Esophagus muscularis mucosa (tissue), 4 donors: ENCODE measurements at regions of chr1 and their contacts with region 1.

Region 1: DNA sequence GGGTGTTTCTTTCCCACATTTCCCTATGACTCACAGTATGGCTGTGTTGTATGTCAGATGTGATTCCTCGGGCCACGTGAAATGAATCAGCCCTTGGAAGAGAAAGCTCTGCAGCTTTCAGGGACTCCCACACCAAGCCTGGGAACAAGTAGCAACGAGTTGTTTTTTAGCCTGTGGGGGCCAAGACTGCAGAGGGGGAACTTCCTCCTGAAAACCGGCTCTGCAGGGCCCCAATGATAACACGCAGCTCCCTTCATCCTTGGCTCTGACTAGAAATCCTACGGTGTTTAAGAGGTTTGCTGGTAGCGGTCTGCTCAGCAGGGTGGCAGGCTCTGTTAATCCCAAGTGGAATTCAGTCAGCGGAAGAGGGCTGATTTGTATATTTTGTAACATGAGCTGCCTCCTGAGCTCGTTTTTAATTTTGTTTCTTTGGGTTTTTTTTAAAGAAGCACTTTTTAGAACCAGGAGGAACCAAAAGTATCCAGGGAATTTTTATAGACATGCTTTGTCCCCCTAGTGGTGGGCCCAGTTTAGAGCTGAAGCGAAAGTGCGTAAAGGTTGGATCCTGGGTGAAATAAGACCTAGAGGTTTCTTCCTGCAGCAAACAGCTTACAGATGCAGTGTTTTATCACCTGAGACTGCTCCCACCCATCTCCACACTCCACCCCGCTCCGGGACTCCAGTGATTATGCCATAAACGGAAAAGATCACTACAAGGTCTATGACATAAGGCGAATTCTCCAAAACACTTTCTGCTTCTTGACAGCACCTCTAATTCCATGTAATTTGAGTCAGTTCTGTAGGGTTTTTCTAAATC is 48.8 kb downstream of the LAMC2 start:
- DNase-seq: peak; percentile 93
- H3K4me3 ChIP-seq: peak overlapping the region; percentile 36 to 48 (median 45)
- H3K27ac ChIP-seq: peak overlapping the region; percentile 78 to 86 (median 84)
- H3K4me1 ChIP-seq: peaks cover 10 to 43% (median 38%) of the 10 kb centered on the region in 4 donors
- H3K27me3 ChIP-seq: no peaks in the 10 kb centered on the region
- CTCF ChIP-seq: peak; percentile 72 to 81 (median 73)
- EP300 ChIP-seq: no peak
- POLR2A ChIP-seq: no peak

Region 2: DNA sequence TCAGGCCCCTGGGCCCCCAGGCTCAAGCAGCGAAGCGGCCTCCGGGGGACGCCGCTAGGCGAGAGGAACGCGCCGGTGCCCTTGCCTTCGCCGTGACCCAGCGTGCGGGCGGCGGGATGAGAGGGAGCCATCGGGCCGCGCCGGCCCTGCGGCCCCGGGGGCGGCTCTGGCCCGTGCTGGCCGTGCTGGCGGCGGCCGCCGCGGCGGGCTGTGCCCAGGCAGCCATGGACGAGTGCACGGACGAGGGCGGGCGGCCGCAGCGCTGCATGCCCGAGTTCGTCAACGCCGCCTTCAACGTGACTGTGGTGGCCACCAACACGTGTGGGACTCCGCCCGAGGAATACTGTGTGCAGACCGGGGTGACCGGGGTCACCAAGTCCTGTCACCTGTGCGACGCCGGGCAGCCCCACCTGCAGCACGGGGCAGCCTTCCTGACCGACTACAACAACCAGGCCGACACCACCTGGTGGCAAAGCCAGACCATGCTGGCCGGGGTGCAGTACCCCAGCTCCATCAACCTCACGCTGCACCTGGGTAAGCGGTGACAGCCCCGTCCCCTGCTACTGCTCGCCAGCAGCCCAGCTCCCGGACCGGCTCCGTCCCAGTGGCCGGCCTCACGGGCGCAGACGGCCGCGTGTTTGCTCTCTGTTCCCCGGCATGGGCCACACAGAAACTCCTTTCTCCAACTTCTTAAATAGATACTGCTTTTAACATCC is 211.1 kb before region 1 on chr1:
- intact Hi-C with region 1: loop called (anchors 5 kb)
- DNase-seq: no peak
- H3K4me3 ChIP-seq: peak overlapping the region; percentile 80 to 97 (median 92)
- H3K27ac ChIP-seq: peak overlapping the region; percentile 98 to 100 (median 100)
- H3K4me1 ChIP-seq: peaks cover 28 to 52% (median 48%) of the 10 kb centered on the region in 4 donors
- H3K27me3 ChIP-seq: no peaks in the 10 kb centered on the region
- CTCF ChIP-seq: peak; percentile 43 to 53 (median 44)
- EP300 ChIP-seq: no peak
- POLR2A ChIP-seq: peak; percentile 25

Region 3: GRCh38 chr1:183144752-183145151 is 90.1 kb before region 1 on chr1:
- intact Hi-C with region 1: loop called (anchors 5 kb)
- DNase-seq: no peak
- H3K4me3 ChIP-seq: no peak overlapping the region
- H3K27ac ChIP-seq: peak overlapping the region; percentile 78 to 81 (median 80)
- H3K4me1 ChIP-seq: peaks cover 15 to 71% (median 67%) of the 10 kb centered on the region in 4 donors
- H3K27me3 ChIP-seq: no peaks in the 10 kb centered on the region
- CTCF ChIP-seq: no peak
- EP300 ChIP-seq: no peak
- POLR2A ChIP-seq: no peak

Region 4: DNA sequence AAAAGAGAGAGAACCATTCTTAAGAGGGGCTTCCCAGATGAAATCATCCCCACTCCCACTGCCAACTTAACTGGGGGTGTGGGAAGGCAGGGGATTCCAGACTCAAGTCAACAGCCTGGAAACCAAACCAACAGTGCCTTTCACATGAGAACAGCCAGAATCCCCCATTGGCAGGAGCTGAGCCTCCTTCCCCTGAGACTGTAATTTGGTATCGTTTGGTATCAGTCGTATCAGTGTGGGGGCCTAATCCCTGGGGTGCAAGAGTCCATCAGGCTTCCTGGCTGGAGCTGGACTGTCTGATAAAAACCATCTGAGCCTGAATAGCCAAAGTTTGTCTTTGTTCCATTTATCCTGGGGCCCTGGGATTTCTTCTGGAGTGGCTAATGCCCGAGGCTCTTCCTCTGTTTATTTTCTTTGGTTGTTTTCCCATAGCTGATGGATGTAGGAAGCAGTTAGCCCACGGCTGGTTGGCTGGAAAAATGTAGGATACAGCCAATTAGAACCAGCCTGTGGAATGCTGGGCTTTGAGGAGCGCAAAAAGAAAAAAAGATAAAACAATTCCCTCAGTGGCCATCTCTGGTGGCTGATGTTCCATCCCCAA is 35.8 kb after region 1 on chr1:
- intact Hi-C with region 1: loop called (anchors 2 kb)
- DNase-seq: no peak
- H3K4me3 ChIP-seq: no peak overlapping the region
- H3K27ac ChIP-seq: peak overlapping the region in 3 of 4 donors; percentile 28 to 36 (median 33)
- H3K4me1 ChIP-seq: peaks cover 15 to 25% (median 22%) of the 10 kb centered on the region in 4 donors
- H3K27me3 ChIP-seq: no peaks in the 10 kb centered on the region
- CTCF ChIP-seq: no peak
- EP300 ChIP-seq: no peak
- POLR2A ChIP-seq: no peak

Region 5: DNA sequence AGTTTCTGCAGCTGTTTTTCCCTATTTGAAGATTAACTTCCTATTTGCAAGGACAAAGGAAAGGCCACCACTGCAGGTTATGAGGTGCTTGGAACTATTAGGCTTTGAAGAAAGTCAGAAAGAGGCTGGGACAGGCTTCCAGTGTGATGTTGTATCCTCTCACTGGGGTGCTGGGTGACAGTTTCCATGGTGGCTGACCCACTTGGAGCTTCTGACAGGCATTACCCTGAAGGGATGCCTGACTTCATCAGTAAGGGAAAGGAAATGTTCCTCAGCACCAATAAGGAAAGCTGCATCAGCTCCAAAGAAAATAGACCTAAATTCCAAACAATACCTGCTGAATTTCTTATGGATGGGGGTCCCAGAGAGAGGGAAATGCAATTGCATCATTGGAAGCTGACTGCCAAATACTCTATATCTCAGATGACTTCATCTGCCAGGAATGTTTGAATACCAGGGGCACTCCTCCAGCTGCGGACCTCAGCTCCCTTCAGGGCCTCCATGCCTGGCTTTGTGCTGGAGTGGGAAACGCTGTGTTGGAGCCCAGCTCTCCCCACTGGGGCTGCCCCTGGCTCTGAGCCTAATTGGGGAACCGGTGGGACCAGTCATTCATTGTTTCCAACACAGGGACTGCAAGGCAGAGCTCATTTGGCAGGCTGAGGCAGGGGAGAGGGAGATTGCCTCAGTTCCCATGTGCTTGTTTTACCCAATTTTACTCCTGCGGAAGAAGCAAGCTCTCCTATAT is 646.7 kb after region 1 on chr1:
- intact Hi-C with region 1: no loop called
- DNase-seq: no peak
- H3K4me3 ChIP-seq: no peak overlapping the region
- H3K27ac ChIP-seq: peak overlapping the region in 3 of 4 donors; percentile 1 to 53 (median 35)
- H3K4me1 ChIP-seq: peaks cover 37 to 66% (median 64%) of the 10 kb centered on the region in 4 donors
- H3K27me3 ChIP-seq: no peaks in the 10 kb centered on the region
- CTCF ChIP-seq: no peak
- EP300 ChIP-seq: no peak
- POLR2A ChIP-seq: no peak